Endothelial cell of umbilical vein (primary cell): ENCODE measurements at regions of chr10 and their contacts with region 1.

Region 1: GRCh38 chr10:132654702-132655661 is 117.4 kb downstream of the INPP5A start:
- DNase-seq: peak; percentile 68
- H3K4me3 ChIP-seq: no peak overlapping the region
- H3K27ac ChIP-seq: no peak overlapping the region
- H3K4me1 ChIP-seq: no peaks in the 10 kb centered on the region
- H3K27me3 ChIP-seq: no peaks in the 10 kb centered on the region
- CTCF ChIP-seq: peak; percentile 92 to 94
- POLR2A ChIP-seq: no peak

Region 2: DNA sequence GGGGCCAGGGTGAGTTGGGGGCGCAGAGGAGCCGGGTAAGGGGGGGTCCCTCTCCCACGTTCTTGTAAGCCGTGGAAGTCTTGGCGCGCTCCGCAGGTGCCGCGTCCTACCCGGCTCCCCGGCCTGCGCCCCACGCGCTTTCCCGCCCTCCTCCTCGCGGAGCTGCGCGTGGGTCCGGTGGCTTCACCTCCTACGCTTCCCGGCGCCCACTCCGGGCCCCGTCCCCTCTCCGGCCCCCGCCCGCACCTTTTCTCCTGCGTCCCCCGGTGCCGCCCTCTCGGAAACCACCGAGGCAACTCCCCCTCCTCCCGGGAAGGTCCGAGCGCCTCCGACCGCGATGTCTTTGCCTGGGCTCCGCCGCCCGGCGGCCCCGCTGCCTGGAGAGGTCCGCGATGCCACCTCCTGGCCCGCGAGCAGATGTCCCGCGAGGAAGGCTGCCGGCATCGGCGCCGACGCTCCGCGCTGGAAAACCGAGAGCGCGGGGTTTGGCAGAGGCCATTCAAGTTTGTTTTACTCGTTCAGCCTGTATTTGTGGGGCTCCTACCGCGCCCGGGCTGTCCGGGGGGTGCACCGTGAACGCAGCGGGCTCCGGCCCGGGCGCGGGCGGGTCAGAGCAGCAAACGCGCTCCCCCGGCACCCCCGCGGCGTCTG is 133.3 kb after region 1 on chr10:
- CTCF ChIA-PET with region 1: interaction called, 14 read pairs
- POLR2A ChIA-PET with region 1: no interaction called
- dilution Hi-C with region 1: no loop called
- intact Hi-C with region 1: loop called (anchors 1 kb)
- DNase-seq: no peak
- H3K4me3 ChIP-seq: no peak overlapping the region
- H3K27ac ChIP-seq: no peak overlapping the region
- H3K4me1 ChIP-seq: no peaks in the 10 kb centered on the region
- H3K27me3 ChIP-seq: peaks cover 35 to 53% of the 10 kb centered on the region in 2 experiments
- CTCF ChIP-seq: peak in 1 of 2 donors; percentile 26
- POLR2A ChIP-seq: no peak

Region 3: GRCh38 chr10:132836832-132837540 is 182.0 kb after region 1 on chr10:
- CTCF ChIA-PET with region 1: no interaction called
- POLR2A ChIA-PET with region 1: no interaction called
- dilution Hi-C with region 1: no loop called
- intact Hi-C with region 1: loop called (anchors 1 kb)
- DNase-seq: peak; percentile 18
- H3K4me3 ChIP-seq: no peak overlapping the region
- H3K27ac ChIP-seq: no peak overlapping the region
- H3K4me1 ChIP-seq: no peaks in the 10 kb centered on the region
- H3K27me3 ChIP-seq: no peaks in the 10 kb centered on the region
- CTCF ChIP-seq: peak; percentile 78 to 88
- POLR2A ChIP-seq: no peak

Region 4: DNA sequence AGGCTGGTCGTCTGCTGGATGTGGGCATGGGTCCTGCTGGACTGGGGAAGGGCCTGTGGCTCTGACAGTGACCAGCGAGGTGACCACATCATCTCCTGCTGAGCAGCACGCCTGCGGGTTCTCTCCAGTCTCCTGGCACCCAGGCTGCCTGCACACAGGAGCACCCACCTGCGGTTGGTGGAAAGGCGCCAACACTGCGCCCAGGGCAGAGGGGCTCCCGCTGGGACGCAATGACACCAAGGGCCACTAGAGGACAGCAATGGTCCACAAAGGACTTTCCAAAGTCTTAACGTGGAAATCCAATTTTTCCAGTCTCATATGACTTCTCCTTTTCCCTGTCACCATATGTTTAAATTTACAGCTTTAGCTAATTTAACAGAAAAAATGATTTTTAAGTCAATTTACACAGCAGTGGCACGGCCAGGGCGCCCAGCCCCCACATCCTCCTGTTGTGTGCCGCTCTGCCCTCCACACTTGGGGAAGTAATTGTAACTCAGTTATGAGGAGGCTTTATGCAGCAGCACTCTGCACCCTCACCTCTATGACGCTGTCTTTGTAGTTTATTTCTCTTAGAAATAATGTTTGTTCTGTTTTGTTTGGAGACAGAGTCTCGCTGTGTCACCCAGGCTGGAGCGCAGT is 249.3 kb after region 1 on chr10:
- CTCF ChIA-PET with region 1: interaction called, 7 read pairs
- POLR2A ChIA-PET with region 1: no interaction called
- dilution Hi-C with region 1: no loop called
- intact Hi-C with region 1: loop called (anchors 1 kb)
- DNase-seq: peak; percentile 33
- H3K4me3 ChIP-seq: no peak overlapping the region
- H3K27ac ChIP-seq: no peak overlapping the region
- H3K4me1 ChIP-seq: no peaks in the 10 kb centered on the region
- H3K27me3 ChIP-seq: no peaks in the 10 kb centered on the region
- CTCF ChIP-seq: peak; percentile 76 to 81
- POLR2A ChIP-seq: no peak

Region 5: GRCh38 chr10:133124357-133125211 is 469.6 kb after region 1 on chr10:
- CTCF ChIA-PET with region 1: interaction called, 4 read pairs
- POLR2A ChIA-PET with region 1: no interaction called
- dilution Hi-C with region 1: no loop called
- intact Hi-C with region 1: loop called (anchors 1 kb)
- DNase-seq: peak; percentile 9
- H3K4me3 ChIP-seq: no peak overlapping the region
- H3K27ac ChIP-seq: no peak overlapping the region
- H3K4me1 ChIP-seq: no peaks in the 10 kb centered on the region
- H3K27me3 ChIP-seq: no peaks in the 10 kb centered on the region
- CTCF ChIP-seq: peak; percentile 19 to 65
- POLR2A ChIP-seq: no peak